ENCODE measurements at regions of chr6 and their contacts with region 1.

Region 1: DNA sequence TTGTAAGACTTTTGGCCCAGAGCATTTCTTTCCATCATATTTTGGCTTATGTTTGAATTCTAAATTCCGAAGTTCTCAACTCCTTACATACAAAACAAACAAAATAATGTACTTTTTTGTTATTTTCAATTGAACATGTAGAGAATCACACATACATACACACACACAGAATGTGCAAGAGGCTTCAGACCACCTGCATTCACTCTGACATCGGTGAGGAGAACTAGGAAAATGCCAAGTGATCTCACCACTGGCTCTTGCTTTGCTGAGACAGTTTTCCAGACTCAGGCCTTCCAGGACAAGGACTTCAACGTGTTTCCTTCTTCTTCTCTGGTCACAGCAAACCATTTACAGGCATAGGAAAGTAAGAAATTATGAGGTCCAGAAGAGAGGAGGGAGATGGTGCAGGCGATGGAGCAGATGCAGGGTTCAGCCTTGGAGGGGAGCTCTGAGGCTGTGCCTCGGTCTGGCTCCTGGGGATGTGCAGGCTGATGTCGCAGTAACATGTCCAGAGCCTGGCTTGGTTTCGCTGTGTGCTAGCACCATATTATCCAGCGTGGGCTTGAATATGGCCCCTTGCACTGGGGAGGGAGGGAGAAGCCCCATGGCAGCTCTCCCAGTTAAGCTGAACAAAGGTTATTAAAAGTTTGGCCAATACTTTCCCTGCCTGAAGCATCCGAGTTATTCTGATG is 93.4 kb downstream of the DACT2 start:
- DNase-seq: no peak
- ATAC-seq: peak in 6 of 8 donors; percentile 36 to 63 (median 48)
- H3K4me3 ChIP-seq: no peak overlapping the region
- H3K27ac ChIP-seq: peak overlapping the region in 7 of 10 donors; percentile 33 to 77 (median 62)
- H3K4me1 ChIP-seq: peaks cover 0 to 11% (median 0%) of the 10 kb centered on the region in 9 donors
- H3K27me3 ChIP-seq: peaks cover 0 to 64% (median 27%) of the 10 kb centered on the region in 7 donors
- CTCF ChIP-seq: no peak

Region 2: DNA sequence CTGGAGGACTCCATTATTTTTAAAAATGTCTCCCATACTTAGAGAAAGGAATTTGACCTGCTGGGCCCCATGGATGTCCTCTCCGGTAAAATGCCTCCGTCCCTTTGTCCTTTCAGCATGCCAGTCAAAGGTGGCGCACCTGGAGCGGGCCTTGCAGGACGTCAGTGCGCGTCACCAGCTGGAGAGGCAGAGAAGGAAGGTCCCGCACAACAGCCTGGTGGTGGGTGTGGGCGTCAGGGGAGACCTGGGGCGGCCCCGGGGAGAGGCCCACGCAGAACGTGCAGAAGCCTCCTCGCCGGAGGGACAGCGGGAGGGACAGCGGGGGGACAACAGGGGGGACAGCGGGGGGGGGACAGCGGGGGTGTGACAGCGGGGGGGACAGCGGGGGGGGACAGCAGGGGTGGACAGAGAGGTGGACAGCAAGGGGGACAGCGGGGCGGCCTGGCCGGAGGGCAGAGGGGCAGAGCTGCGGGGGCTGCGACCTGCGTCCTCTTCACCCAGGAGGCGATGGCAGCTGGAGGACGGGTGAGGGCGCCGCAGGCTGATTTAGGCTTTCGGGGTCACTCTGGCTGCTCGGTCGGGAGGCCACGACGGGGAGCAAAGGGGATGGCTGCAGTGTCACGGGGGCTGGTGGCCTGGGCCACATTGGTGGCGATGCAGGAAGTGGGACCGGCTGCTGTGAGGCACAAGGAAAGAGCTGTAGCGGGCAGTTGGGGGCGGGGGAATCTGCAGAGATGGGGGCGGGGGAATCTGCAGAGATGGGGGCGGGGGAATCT is 229.6 kb before region 1 on chr6:
- intact Hi-C with region 1: no loop called
- DNase-seq: no peak
- ATAC-seq: no peak
- H3K4me3 ChIP-seq: no peak overlapping the region
- H3K27ac ChIP-seq: no peak overlapping the region
- H3K4me1 ChIP-seq: peaks cover 0 to 19% (median 8%) of the 10 kb centered on the region in 9 donors
- H3K27me3 ChIP-seq: peaks cover 0 to 16% (median 0%) of the 10 kb centered on the region in 7 donors
- CTCF ChIP-seq: no peak

Region 3: DNA sequence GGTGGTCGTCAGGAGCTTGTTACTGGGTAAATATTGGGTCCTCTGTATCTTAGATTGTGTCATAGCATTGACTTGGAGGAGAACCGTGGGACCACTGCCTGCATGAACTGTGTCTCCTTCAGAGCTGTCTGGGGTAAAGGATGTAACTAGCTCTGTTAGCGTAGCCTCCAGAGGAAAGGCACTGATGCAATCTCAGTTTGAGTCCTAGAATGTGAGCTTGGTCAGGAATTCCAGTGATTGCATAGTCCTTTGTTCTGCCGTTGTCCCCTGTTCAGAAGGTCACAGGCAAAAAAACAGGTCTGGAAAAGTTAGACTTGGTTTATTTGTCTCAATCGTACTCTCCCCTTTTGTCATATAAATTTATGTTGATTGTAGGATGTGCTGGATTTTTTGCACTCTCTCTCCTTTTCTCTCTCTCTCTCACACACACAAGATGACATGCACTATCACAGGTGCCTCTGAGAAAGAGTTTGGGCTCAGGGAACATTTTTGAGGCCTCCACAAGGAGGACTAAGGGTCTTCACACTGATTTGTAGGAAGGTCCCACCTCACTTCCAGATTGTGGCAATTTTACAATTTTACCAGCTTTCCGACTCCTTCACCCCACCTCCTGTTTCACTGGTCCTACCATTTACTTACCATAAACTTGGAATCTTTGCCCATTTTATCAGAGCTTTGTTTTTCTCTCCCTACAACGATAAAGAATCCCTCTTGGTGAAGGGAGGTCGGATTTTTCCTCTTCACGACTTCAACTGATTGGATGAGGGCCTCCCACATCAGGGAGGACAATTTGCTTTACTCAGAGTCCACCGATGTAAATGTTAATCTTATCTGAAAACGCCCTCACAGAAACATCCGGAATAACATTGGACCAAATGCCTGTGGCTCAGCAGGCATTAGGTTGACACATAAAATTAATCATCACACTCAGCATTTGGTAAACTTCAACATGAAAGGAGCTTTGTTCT is 100.4 kb after region 1 on chr6:
- intact Hi-C with region 1: loop called in 1 of 10 experiments (anchors 10 kb)
- DNase-seq: no peak
- ATAC-seq: peak in 7 of 8 donors; percentile 41 to 91 (median 73)
- H3K4me3 ChIP-seq: no peak overlapping the region
- H3K27ac ChIP-seq: peak overlapping the region in 7 of 10 donors; percentile 7 to 67 (median 35)
- H3K4me1 ChIP-seq: no peaks in the 10 kb centered on the region
- H3K27me3 ChIP-seq: peaks cover 0 to 71% (median 51%) of the 10 kb centered on the region in 7 donors
- CTCF ChIP-seq: no peak

Measured in heart right ventricle (tissue), 16 donors.